Activated B cell treated with CpG ODN at 0.5 μM for 24 hours (primary cell): ENCODE measurements at regions of chr10 and their contacts with region 1.

Region 1: DNA sequence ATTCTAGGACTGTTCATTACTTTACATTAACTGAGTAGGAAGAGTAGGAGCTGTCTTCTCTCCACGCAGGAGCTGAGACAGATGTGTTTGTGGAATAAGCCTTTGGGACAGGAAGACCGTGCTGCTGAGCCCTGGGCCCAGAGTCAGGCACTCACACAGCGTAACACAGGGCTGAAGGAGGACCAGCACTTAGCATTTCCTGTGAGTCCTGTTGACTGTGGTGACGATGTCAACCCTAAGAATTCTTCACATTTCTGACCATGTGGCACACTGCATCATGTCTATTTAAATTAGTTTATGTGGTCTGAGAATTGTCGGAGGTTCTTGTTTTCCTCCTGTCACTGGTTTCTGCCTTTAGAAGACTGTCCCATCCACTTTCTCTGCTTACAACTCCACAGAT is 117.2 kb downstream of the PIP4K2A start:
- DNase-seq: no peak
- ATAC-seq: peak; percentile 43
- H3K4me3 Mint-ChIP-seq: peak overlapping the region; percentile 48
- H3K27ac Mint-ChIP-seq: peak overlapping the region; percentile 83
- H3K4me1 Mint-ChIP-seq: peaks cover 96% of the 10 kb centered on the region
- H3K27me3 Mint-ChIP-seq: no peaks in the 10 kb centered on the region
- CTCF ChIP-seq: no peak

Region 2: DNA sequence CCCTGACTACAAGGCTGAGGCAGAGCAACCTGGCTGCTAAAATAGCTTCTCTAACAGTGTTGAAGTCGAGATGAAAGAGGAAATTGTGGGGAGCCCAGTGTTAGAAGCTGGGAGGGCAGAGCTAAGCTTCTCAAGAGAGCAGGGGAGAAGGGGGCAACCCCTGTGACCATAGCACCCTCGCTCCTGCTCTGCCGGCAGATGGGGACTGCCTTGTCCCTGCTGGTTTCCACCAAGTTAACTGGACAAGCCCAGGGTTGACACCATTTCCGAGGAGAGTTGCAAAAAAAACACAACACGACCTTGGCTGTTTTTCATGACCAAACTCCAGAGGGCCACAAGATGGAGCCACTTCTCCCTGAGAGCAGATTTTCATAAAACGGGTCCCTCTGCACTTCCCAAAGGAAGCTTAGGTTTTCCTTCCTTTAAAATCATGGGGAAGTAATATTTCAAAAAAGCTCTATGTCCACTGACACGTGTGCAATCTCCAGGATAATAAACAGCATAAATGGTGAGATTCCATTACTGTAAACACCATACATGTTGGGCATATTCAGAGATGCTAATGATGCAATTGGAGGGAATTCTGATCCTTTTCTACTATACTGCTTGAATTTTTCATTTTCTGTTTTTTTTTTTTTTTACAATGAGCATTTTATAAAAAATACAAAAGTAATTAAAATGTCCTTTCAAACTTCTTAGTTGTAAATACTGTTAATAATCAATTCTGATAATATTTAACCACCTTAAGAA is 23.1 kb before region 1 on chr10:
- CTCF ChIA-PET with region 1: no interaction called
- POLR2A ChIA-PET with region 1: no interaction called
- intact Hi-C with region 1: no loop called
- DNase-seq: no peak
- ATAC-seq: peak; percentile 34
- H3K4me3 Mint-ChIP-seq: no peak overlapping the region
- H3K27ac Mint-ChIP-seq: peak overlapping the region; percentile 63
- H3K4me1 Mint-ChIP-seq: peaks cover 8% of the 10 kb centered on the region
- H3K27me3 Mint-ChIP-seq: no peaks in the 10 kb centered on the region
- CTCF ChIP-seq: no peak

Region 3: DNA sequence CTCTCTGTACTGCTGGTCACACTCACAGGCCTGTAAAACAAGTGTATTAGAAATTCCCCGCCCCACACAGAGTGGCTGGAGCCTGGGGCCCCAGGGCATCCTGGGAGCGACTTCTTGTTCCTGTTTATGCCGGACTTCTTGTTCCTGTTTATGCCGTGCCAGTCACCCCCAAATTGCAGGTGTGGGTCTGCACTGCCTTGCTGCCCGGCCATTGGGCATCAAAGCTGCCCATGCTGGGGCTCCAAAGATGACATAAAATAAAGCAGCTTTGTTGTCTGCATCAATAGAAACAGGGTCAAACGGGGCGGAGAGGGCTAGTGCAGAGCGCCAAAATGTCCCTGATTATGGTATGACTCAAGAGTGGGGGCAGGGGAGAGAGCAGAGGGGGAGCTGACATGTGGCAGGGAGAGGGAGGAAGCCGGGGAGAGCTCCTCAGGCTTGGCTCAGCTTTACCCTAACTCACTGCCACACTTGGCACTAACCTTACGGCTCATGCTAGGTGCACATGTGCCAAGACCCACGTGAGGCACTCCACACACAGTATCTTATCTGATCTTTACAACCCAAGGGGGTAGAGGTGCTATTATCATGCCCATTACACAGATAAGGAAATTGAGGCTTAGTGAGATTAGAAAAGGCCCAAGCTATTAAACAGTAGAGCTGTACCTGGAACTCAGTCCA is 18.8 kb after region 1 on chr10:
- CTCF ChIA-PET with region 1: interaction called, 5 read pairs
- POLR2A ChIA-PET with region 1: interaction called, 17 read pairs
- intact Hi-C with region 1: no loop called
- DNase-seq: peak; percentile 36
- ATAC-seq: peak; percentile 74
- H3K4me3 Mint-ChIP-seq: peak overlapping the region; percentile 86
- H3K27ac Mint-ChIP-seq: peak overlapping the region; percentile 96
- H3K4me1 Mint-ChIP-seq: peaks cover 95% of the 10 kb centered on the region
- H3K27me3 Mint-ChIP-seq: no peaks in the 10 kb centered on the region
- CTCF ChIP-seq: no peak

Region 4: GRCh38 chr10:22648547-22648961 is 51.4 kb after region 1 on chr10:
- CTCF ChIA-PET with region 1: no interaction called
- POLR2A ChIA-PET with region 1: no interaction called
- intact Hi-C with region 1: no loop called
- DNase-seq: no peak
- ATAC-seq: no peak
- H3K4me3 Mint-ChIP-seq: peak overlapping the region; percentile 24
- H3K27ac Mint-ChIP-seq: peak overlapping the region; percentile 18
- H3K4me1 Mint-ChIP-seq: peaks cover 90% of the 10 kb centered on the region
- H3K27me3 Mint-ChIP-seq: no peaks in the 10 kb centered on the region
- CTCF ChIP-seq: no peak

Region 5: DNA sequence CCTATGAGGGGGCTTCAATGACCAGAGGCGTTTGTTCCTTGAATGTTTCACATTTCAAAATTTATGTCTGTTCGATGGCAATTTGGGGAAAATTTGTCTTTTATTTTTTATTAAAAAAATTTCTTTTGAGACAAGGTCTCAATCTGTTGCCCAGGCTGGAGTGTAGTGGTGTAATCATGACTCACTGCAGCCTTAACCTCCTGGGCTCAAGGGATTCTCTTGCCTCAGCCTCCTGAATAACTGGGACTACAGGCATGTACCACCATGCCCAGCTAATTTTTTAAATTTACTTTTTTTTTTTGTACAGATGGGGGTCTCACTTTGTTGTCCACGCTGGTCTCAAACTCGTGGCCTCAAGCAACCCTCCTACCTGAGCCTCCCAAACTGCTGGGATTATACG is 881.4 kb after region 1 on chr10:
- CTCF ChIA-PET with region 1: no interaction called
- POLR2A ChIA-PET with region 1: interaction called, 11 read pairs
- intact Hi-C with region 1: no loop called
- DNase-seq: no peak
- ATAC-seq: no peak
- H3K4me3 Mint-ChIP-seq: no peak overlapping the region
- H3K27ac Mint-ChIP-seq: no peak overlapping the region
- H3K4me1 Mint-ChIP-seq: peaks cover 6% of the 10 kb centered on the region
- H3K27me3 Mint-ChIP-seq: peaks cover 2% of the 10 kb centered on the region
- CTCF ChIP-seq: no peak